ENCODE measurements at regions of chr1 and their contacts with region 1.

Region 1: GRCh38 chr1:45303582-45304310 is 22.9 kb upstream of the HPDL start:
- DNase-seq: peak; percentile 98 to 99 (median 99)
- ATAC-seq: peak; percentile 98
- H3K4me3 ChIP-seq: peak overlapping the region; percentile 57 to 89 (median 71)
- H3K27ac ChIP-seq: peak overlapping the region; percentile 76 to 98 (median 92)
- H3K4me1 ChIP-seq: peaks cover 0 to 17% (median 14%) of the 10 kb centered on the region in 12 donors
- H3K27me3 ChIP-seq: no peaks in the 10 kb centered on the region
- CTCF ChIP-seq: peak; percentile 48 to 80 (median 66)
- POLR2A ChIP-seq: peak in 1 of 2 donors; percentile 49

Region 2: DNA sequence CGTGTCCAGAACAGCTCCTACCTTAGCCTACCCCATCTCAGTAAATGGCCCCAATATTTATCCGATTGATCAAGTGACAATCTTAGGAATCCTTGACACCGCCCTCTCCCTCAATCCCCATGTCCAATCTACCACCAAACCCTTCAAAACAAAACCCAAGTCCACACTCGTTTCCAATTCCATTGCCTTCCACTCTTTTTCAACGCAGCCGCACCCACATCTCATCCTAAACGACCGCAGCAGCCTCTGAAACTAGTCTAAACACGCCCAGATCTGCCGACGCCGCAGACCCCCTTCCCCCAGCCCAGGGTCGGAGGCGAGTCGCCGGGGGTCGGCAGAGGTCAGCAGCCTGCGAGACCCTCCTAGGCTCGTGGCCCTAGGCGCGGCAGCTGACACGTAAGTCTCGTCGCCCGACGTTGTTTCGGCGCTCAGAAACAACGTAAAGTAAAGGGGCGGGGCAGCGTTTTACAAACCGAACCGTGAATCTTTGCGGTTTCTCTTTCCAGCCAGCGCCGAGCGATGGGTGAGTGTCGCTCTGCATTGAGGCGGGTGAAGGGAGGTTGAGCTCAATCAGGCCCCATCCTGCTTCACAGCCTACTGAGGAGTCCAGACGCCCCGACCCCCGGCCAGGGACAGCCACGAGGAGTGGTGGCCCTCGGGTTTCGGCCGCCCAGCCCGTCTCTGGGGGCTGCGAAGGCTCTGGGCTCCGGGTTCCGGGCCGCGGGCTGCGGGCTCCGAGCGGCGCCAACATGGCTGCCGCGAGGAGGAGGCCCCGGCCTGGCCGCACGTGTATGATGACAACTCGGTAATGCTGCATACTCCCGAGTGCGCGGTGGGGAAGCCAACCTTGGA is 528.4 kb before region 1 on chr1 and contains the start of gene RPS8:
- intact Hi-C with region 1: loop called in 3 of 10 experiments (anchors 10 kb)
- DNase-seq: peak; percentile 92 to 96 (median 94)
- ATAC-seq: peak; percentile 89 to 96 (median 94)
- H3K4me3 ChIP-seq: peak within 1 kb of the TSS; percentile 59 to 95 (median 85)
- H3K27ac ChIP-seq: peak within 1 kb of the TSS; percentile 85 to 99 (median 95)
- H3K4me1 ChIP-seq: peaks cover 2 to 38% (median 23%) of the 10 kb centered on the region in 12 donors
- H3K27me3 ChIP-seq: no peaks in the 10 kb centered on the region
- CTCF ChIP-seq: peak in 1 of 12 donors; percentile 13
- POLR2A ChIP-seq: peak; percentile 47 to 96
- total RNA-seq, gene RPS8: 576 to 1,019 (median 853) TPM

Region 3: DNA sequence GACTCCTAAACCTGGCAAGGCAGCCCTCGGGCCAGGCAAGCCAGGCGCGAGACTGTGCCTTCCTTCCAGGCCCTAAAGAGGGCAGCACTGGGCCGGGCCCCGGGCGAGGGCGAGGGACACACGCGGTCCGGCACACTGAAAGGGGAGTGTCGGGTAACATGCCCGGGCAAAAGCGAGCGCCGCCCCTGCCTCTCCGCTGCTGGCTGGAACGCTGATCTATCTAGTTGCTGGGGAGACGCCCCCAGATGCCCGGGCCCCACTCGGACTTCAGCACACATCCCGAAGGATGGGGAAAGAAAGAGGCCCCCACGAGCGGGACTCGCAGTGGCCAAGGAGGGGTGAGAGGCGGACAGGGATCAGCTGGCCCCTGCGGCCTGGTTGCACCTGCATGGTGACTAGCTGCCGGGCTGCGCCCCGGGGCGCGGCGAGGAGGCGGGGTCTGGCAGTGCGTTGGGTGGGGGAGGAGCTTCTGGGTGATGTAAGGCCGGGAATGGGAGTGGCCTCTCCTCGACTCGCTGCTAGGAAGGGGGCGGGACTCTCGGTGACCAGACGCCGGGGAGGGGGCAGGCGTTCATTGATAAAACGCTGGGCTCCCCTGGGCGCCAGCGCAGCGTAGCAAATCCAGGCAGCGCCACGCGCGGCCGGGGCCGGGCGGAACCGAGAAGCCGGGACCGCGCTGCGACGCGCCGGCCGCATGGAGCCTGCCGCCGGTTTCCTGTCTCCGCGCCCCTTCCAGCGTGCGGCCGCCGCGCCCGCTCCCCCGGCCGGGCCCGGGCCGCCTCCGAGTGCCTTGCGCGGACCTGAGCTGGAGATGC is 503.8 kb before region 1 on chr1 and contains the start of gene PLK3:
- intact Hi-C with region 1: loop called in 1 of 10 experiments (anchors 10 kb)
- DNase-seq: peak; percentile 98 to 99 (median 99)
- ATAC-seq: peak; percentile 96 to 98 (median 97)
- H3K4me3 ChIP-seq: peak within 1 kb of the TSS; percentile 67 to 97 (median 88)
- H3K27ac ChIP-seq: peak within 1 kb of the TSS; percentile 77 to 98 (median 94)
- H3K4me1 ChIP-seq: peaks cover 3 to 45% (median 31%) of the 10 kb centered on the region in 12 donors
- H3K27me3 ChIP-seq: no peaks in the 10 kb centered on the region
- CTCF ChIP-seq: peak; percentile 89 to 98 (median 94)
- POLR2A ChIP-seq: peak; percentile 70 to 99
- total RNA-seq, gene PLK3: 4.5 to 17.9 (median 6.6) TPM

Region 4: DNA sequence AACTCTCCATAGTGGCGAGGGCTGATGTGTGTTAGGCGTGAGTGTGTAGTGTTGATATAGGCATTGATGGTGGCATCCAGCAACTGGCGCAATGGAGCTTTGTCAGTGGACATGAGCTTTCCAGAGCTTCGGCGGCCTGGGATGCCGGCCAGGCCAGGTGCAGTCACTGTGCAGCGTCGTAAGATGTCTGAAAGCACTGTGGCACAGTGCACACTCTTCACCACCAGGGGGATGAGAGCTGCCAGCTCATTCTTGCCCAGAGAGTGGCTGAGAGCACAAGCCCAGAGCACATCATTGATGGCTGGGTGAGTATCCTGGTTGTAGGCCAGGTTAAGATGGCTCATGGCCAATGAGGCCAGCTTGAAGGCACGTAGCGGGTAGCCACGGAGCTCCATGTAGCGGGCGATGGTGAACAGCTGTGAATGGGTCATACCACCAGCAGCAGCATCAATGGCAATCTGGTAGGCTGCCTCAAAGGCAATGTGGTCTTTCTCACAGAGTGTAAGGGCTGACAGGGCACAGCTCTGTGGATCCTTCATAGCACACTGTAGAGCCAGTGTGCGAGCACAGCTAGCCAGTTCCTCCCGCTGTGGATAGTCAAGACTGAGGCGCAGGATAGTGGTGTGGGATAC is 285.0 kb before region 1 on chr1:
- intact Hi-C with region 1: loop called (anchors 1 to 2 kb)
- DNase-seq: no peak
- ATAC-seq: peak in 3 of 4 donors; percentile 54 to 69 (median 67)
- H3K4me3 ChIP-seq: no peak overlapping the region
- H3K27ac ChIP-seq: no peak overlapping the region
- H3K4me1 ChIP-seq: peaks cover 0 to 12% (median 5%) of the 10 kb centered on the region in 12 donors
- H3K27me3 ChIP-seq: no peaks in the 10 kb centered on the region
- CTCF ChIP-seq: peak; percentile 40 to 73 (median 50)
- POLR2A ChIP-seq: no peak

Region 5: DNA sequence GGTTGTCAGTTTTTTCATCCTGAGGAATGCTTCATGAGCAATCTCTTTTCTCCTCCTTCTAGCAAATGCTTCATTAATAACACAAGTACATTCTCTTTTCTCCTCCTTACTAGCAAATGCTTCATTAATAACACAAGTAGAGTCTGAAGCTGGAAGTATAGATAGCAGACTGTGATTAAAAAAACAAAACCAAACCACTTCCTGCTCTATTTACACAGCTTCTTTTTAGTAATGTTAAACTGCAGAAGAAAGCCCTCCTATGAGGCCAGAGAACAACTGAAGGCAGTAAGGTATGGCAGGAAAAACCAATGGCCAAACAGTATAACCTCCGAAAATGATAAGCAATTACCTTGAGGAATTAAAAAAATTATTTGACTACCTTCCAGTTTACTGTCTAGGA is 187.4 kb before region 1 on chr1:
- intact Hi-C with region 1: no loop called
- DNase-seq: no peak
- ATAC-seq: no peak
- H3K4me3 ChIP-seq: no peak overlapping the region
- H3K27ac ChIP-seq: no peak overlapping the region
- H3K4me1 ChIP-seq: peaks cover 0 to 4% (median 0%) of the 10 kb centered on the region in 12 donors
- H3K27me3 ChIP-seq: no peaks in the 10 kb centered on the region
- CTCF ChIP-seq: no peak
- POLR2A ChIP-seq: no peak

Region 6: GRCh38 chr1:45246760-45247159 is 57.0 kb before region 1 on chr1:
- intact Hi-C with region 1: no loop called
- DNase-seq: no peak
- ATAC-seq: peak in 3 of 4 donors; percentile 20 to 45 (median 33)
- H3K4me3 ChIP-seq: no peak overlapping the region
- H3K27ac ChIP-seq: no peak overlapping the region
- H3K4me1 ChIP-seq: no peaks in the 10 kb centered on the region
- H3K27me3 ChIP-seq: peaks cover 0 to 3% (median 0%) of the 10 kb centered on the region in 9 donors
- CTCF ChIP-seq: no peak
- POLR2A ChIP-seq: no peak

Region 7: GRCh38 chr1:45258059-45258650 is 45.6 kb before region 1 on chr1:
- intact Hi-C with region 1: no loop called
- DNase-seq: no peak
- ATAC-seq: no peak
- H3K4me3 ChIP-seq: no peak overlapping the region
- H3K27ac ChIP-seq: no peak overlapping the region
- H3K4me1 ChIP-seq: no peaks in the 10 kb centered on the region
- H3K27me3 ChIP-seq: peaks cover 0 to 4% (median 0%) of the 10 kb centered on the region in 9 donors
- CTCF ChIP-seq: no peak
- POLR2A ChIP-seq: no peak

Region 8: GRCh38 chr1:45339789-45340570 is 36.2 kb after region 1 on chr1 and contains the starts of genes MUTYH and TOE1:
- intact Hi-C with region 1: loop called in 4 of 10 experiments (anchors 2 to 5 kb)
- DNase-seq: peak; percentile 93 to 96 (median 96)
- ATAC-seq: peak; percentile 92 to 96 (median 96)
- H3K4me3 ChIP-seq: peak within 1 kb of the TSS; percentile 65 to 98 (median 86)
- H3K27ac ChIP-seq: peak within 1 kb of the TSS; percentile 89 to 99 (median 98)
- H3K4me1 ChIP-seq: peaks cover 0 to 32% (median 22%) of the 10 kb centered on the region in 12 donors
- H3K27me3 ChIP-seq: no peaks in the 10 kb centered on the region
- CTCF ChIP-seq: peak in 3 of 12 donors; percentile 5 to 27 (median 26)
- POLR2A ChIP-seq: peak in 1 of 2 donors; percentile 60
- total RNA-seq, gene MUTYH: 4.4 to 11.9 (median 7.1) TPM
- total RNA-seq, gene TOE1: 2.7 to 7.9 (median 3.7) TPM